Ascending aorta (tissue), 2 donors: ENCODE measurements at regions of chr2 and their contacts with region 1.

Region 1: GRCh38 chr2:188788621-188789020 is 185.6 kb upstream of the COL3A1 start:
- DNase-seq: peak; percentile 15 to 88
- H3K4me3 ChIP-seq: no peak overlapping the region
- H3K27ac ChIP-seq: peak overlapping the region; percentile 68 to 80
- H3K4me1 ChIP-seq: peaks cover 0 to 28% of the 10 kb centered on the region in 2 donors
- H3K27me3 ChIP-seq: no peaks in the 10 kb centered on the region
- CTCF ChIP-seq: no peak

Region 2: GRCh38 chr2:188713961-188714360 is 74.7 kb before region 1 on chr2:
- intact Hi-C with region 1: no loop called
- DNase-seq: no peak
- H3K4me3 ChIP-seq: no peak overlapping the region
- H3K27ac ChIP-seq: no peak overlapping the region
- H3K4me1 ChIP-seq: no peaks in the 10 kb centered on the region
- H3K27me3 ChIP-seq: no peaks in the 10 kb centered on the region
- CTCF ChIP-seq: no peak

Region 3: GRCh38 chr2:188819781-188820180 is 31.2 kb after region 1 on chr2:
- intact Hi-C with region 1: no loop called
- DNase-seq: no peak
- H3K4me3 ChIP-seq: no peak overlapping the region
- H3K27ac ChIP-seq: no peak overlapping the region
- H3K4me1 ChIP-seq: no peaks in the 10 kb centered on the region
- H3K27me3 ChIP-seq: no peaks in the 10 kb centered on the region
- CTCF ChIP-seq: no peak

Region 4: GRCh38 chr2:188870289-188870688 is 81.7 kb after region 1 on chr2:
- intact Hi-C with region 1: loop called (anchors 5 kb)
- DNase-seq: no peak
- H3K4me3 ChIP-seq: no peak overlapping the region
- H3K27ac ChIP-seq: peak overlapping the region; percentile 37 to 60
- H3K4me1 ChIP-seq: peaks cover 0 to 16% of the 10 kb centered on the region in 2 donors
- H3K27me3 ChIP-seq: no peaks in the 10 kb centered on the region
- CTCF ChIP-seq: no peak

Region 5: DNA sequence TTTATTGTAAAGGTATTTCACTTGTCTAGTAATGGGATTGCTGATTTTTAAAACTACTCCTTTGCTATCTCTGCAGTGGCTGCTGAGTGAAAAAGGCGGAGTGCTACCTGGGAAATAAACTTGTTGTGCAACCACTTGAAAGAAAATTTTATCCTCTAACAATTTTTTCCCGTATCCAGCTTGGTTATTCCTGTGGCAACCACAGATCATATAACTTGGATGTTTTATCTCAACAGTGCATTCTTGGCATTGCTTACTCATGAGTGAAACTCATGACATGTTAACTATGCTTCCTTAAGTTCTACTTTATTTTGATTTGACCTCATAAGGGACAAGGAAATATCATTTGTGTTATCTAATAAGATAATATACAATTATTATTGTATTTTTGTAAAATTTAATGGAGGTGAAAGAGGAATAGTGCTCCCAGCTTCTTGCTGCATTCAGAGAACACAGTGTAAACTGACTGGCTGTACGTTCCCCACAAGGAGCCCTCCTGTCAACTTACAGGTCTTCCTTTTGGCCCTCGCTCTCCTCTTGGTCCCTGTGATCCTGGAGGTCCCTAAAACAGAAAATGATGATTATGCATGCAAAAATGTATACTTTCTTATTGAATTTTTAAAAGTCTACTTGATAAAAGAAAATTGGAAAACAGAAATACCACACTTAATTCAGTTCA is 308.3 kb after region 1 on chr2:
- intact Hi-C with region 1: loop called (anchors 10 kb)
- DNase-seq: no peak
- H3K4me3 ChIP-seq: no peak overlapping the region
- H3K27ac ChIP-seq: no peak overlapping the region
- H3K4me1 ChIP-seq: peaks cover 0 to 19% of the 10 kb centered on the region in 2 donors
- H3K27me3 ChIP-seq: no peaks in the 10 kb centered on the region
- CTCF ChIP-seq: no peak